ENCODE measurements at regions of chr7 and their contacts with region 1.

Region 1: DNA sequence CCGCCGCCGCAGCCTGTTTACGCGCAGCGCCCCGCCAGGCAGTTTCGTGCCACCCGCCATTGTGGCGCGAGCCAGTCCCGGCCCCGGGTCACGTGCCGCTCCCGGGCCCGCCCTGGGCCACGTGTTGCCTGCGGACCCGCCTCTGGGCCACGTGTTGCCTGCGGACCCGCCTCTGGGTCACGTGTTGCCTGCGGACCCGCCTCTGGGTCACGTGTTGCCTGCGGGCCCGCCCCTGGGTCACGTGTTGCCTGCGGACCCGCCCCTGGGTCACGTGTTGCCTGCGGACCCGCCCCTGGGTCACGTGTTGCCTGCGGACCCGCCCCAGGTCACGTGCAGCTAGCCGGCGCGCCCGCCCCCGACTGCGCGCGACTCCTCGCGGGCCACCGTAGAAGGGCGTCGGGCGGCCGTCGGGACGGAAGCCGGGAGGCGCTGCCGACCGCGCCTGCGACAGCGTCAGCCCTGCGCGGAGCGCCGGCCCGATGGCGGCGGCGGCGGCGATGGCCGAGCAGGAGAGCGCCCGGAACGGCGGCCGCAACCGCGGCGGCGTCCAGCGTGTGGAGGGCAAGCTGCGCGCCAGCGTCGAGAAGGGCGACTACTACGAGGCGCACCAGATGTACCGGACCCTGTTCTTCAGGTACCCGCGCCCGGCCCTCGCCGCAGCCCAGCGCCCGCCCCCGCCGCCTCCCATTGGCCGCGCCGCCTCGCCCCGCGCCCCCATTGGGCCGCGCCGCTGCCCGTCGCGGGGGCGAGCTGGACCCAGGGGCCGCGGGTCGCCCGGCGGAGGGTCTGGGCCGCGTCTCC is at the start of gene GET4:
- DNase-seq: peak; percentile 93
- H3K4me3 ChIP-seq: peak within 1 kb of the TSS; percentile 79 to 94 (median 94)
- H3K27ac ChIP-seq: peak within 1 kb of the TSS; percentile 69
- H3K4me1 ChIP-seq: peaks cover 6% of the 10 kb centered on the region
- H3K27me3 ChIP-seq: no peaks in the 10 kb centered on the region
- CTCF ChIP-seq: no peak
- total RNA-seq, gene GET4: 26.0 to 40.8 TPM

Region 2: DNA sequence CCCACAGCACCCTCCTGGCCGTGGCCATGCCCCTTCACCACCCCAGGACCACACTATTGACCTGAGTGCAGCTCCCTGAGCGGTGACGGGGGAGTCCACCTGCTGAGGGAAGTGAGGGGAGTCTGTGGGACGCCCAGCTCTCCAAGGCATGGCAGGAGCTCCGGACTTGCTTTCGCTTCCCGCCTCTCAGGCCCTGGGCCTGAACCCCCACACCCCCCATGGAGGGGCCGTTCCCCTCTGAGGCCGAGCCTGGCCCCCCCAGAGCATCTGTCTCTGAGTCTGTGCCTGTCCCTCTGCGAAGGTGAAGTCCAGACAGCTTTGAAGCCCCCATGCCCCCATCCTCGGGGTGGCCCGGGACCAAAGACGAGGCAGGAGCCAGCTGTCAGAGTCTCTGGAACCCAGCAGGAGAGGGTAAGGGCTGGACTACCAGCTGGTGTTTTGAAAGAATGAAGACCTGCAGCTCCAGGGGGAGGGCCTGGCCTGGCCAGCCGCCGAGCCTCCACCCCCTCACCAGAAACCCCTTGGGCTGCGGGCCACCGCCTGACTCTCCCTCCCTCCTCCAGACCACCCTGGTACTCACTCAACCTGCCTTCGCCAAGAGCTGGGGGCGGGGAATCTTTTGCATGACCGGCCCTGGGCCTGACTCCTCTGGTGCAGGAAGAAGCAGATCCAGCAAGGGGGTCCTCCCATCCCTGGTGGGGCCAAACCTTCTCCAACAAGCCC is 470.7 kb before region 1 on chr7:
- CTCF ChIA-PET with region 1: no interaction called
- dilution Hi-C with region 1: no loop called
- in situ Hi-C with region 1: no loop called
- intact Hi-C with region 1: no loop called
- DNase-seq: no peak
- H3K4me3 ChIP-seq: no peak overlapping the region
- H3K27ac ChIP-seq: no peak overlapping the region
- H3K4me1 ChIP-seq: no peaks in the 10 kb centered on the region
- H3K27me3 ChIP-seq: peaks cover 8% of the 10 kb centered on the region
- CTCF ChIP-seq: no peak

Region 3: GRCh38 chr7:513521-514166 is 362.7 kb before region 1 on chr7:
- CTCF ChIA-PET with region 1: no interaction called
- dilution Hi-C with region 1: no loop called
- in situ Hi-C with region 1: no loop called
- intact Hi-C with region 1: loop called (anchors 1 kb)
- DNase-seq: peak; percentile 55
- H3K4me3 ChIP-seq: peak overlapping the region in 1 of 3 experiments; percentile 7
- H3K27ac ChIP-seq: peak overlapping the region; percentile 44
- H3K4me1 ChIP-seq: peaks cover 50% of the 10 kb centered on the region
- H3K27me3 ChIP-seq: no peaks in the 10 kb centered on the region
- CTCF ChIP-seq: peak in 1 of 2 donors; percentile 36

Region 4: GRCh38 chr7:794671-795329 is 81.6 kb before region 1 on chr7:
- CTCF ChIA-PET with region 1: no interaction called
- dilution Hi-C with region 1: no loop called
- in situ Hi-C with region 1: loop called in 1 of 2 experiments (anchors 5 kb)
- intact Hi-C with region 1: no loop called
- DNase-seq: no peak
- H3K4me3 ChIP-seq: no peak overlapping the region
- H3K27ac ChIP-seq: no peak overlapping the region
- H3K4me1 ChIP-seq: no peaks in the 10 kb centered on the region
- H3K27me3 ChIP-seq: no peaks in the 10 kb centered on the region
- CTCF ChIP-seq: no peak

Region 5: DNA sequence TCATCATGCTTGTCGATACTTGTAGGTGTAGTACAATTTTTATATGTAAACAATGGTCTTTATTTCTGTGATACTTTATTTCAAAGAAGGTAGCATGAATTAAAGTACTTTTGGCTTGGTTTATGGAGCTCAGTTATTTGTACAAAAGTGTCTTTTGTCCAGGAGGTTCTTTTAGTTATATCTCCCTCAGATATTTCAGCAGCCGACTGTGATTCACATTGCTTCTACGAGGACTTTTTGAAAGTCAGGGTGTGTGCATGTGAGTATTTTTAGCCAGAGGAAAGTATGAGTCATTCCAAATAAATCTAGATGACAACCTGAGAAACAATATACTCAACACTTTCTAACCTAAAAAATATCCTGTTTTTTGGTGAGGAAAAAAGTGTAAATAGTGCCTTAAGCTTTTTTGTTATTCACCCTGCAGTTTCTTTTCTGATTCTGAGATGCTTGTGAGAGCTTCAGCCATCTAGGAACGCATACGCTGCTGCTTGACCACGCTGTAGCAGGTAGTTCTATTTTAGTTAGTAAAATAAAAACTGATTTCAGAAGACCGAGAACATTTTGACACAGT is 44.7 kb before region 1 on chr7:
- CTCF ChIA-PET with region 1: no interaction called
- dilution Hi-C with region 1: no loop called
- in situ Hi-C with region 1: no loop called
- intact Hi-C with region 1: loop called (anchors 1 kb)
- DNase-seq: peak; percentile 93
- H3K4me3 ChIP-seq: peak overlapping the region in 2 of 3 experiments; percentile 36 to 41
- H3K27ac ChIP-seq: peak overlapping the region; percentile 100
- H3K4me1 ChIP-seq: peaks cover 50% of the 10 kb centered on the region
- H3K27me3 ChIP-seq: no peaks in the 10 kb centered on the region
- CTCF ChIP-seq: no peak

Region 6: DNA sequence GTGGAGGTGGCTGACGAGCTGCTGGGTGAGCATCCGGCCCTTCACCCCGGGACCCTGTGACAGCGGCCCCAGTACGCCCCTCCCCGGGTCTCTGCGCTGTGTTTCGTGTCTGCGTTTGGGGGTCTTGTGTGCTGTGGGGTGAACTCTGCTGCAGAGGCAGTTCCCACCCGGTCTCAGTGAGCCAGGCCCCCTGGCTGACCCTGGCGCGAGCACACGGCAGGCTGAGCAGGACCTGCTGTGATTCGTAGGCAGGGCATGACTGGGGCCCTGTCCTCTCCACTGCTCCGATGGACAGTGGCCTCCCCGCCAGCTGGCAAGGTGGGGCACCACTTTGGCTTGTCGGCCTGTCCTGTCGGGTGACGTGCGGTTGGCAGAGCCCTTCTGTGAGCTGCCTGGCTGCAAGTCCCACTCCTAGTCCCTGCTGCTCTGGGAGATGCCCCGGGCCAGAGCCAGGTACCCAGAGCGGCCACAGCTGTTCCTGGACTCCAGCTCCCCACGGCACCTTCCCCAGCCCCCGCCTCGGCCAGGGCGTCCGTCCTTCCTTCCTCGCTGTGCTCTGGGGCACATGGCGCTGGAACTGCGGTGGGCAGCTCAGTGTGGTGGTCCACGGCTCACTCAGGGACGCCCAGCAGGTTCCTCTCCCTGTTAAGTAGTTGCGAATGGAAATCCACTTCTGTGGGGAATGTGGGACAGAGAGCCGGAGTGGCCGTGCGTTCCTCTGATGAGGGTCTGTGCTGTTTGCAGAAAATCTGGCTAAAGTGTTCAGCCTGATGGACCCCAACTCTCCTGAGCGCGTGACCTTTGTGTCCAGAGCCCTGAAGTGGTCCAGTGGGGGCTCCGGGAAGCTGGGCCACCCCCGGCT is 10.5 kb after region 1 on chr7:
- CTCF ChIA-PET with region 1: no interaction called
- dilution Hi-C with region 1: no loop called
- in situ Hi-C with region 1: no loop called
- intact Hi-C with region 1: loop called (anchors 1 kb)
- DNase-seq: no peak
- H3K4me3 ChIP-seq: no peak overlapping the region
- H3K27ac ChIP-seq: no peak overlapping the region
- H3K4me1 ChIP-seq: no peaks in the 10 kb centered on the region
- H3K27me3 ChIP-seq: no peaks in the 10 kb centered on the region
- CTCF ChIP-seq: no peak

Region 7: GRCh38 chr7:1081931-1082401 is 205.6 kb after region 1 on chr7:
- CTCF ChIA-PET with region 1: no interaction called
- dilution Hi-C with region 1: no loop called
- in situ Hi-C with region 1: no loop called
- intact Hi-C with region 1: no loop called
- DNase-seq: no peak
- H3K4me3 ChIP-seq: no peak overlapping the region
- H3K27ac ChIP-seq: no peak overlapping the region
- H3K4me1 ChIP-seq: peaks cover 8% of the 10 kb centered on the region
- H3K27me3 ChIP-seq: no peaks in the 10 kb centered on the region
- CTCF ChIP-seq: no peak